Left cardiac atrium (tissue), 4 donors: ENCODE measurements at regions of chr2 and their contacts with region 1.

Region 1: DNA sequence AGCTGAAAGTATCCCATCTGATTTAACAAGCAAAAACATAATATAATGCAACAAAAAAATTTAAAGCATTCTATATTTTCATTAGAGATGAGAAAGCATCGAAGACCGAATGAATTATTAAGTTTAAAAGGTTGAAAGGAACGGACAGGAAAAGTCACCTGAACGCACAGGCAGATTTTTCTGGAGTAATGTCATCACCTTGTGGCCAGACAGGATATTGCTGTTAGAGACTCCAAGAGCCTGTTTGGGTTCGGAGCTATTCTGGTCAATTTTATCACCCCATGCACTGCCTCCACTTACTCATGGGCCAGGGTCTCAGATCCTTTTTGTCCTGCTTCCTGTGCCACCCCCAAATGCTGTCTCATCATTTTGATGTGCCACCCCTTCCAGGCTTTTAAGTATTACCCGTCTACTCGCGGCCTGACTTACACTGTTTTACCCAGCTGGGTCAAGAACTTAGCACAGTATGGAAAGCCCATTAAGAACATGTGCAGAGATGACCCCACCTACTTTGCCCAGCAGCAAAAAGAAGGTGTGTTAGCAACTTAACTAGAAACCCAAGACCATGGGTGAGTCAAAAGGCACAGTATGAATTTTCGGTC is 27.3 kb downstream of the GKN2 start:
- DNase-seq: no peak
- ATAC-seq: peak; percentile 53 to 73

Region 2: GRCh38 chr2:68467077-68467960 is 458.1 kb before region 1 on chr2 and contains the starts of genes APLF and FBXO48:
- intact Hi-C with region 1: loop called in 1 of 2 experiments (anchors 10 kb)
- DNase-seq: peak; percentile 98
- ATAC-seq: peak; percentile 98 to 99
- total RNA-seq, gene APLF: 4.6 to 5.5 TPM
- total RNA-seq, gene FBXO48: 0.60 to 1.4 TPM

Region 3: GRCh38 chr2:68487773-68488355 is 437.5 kb before region 1 on chr2:
- intact Hi-C with region 1: loop called in 1 of 2 experiments (anchors 2 kb)
- DNase-seq: no peak
- ATAC-seq: no peak

Region 4: GRCh38 chr2:68709421-68709911 is 215.9 kb before region 1 on chr2:
- intact Hi-C with region 1: loop called in 1 of 2 experiments (anchors 10 kb)
- DNase-seq: no peak
- ATAC-seq: peak; percentile 59 to 71